H1 (cell line): ENCODE measurements at regions of chr6 and their contacts with region 1.

Region 1: GRCh38 chr6:2870056-2870674 is 28.5 kb upstream of the SERPINB1 start:
- DNase-seq: no peak
- H3K4me3 ChIP-seq: no peak overlapping the region
- H3K27ac ChIP-seq: no peak overlapping the region
- H3K4me1 ChIP-seq: peaks cover 12 to 21% (median 16%) of the 10 kb centered on the region in 4 experiments
- H3K27me3 ChIP-seq: peaks cover 0 to 7% (median 6%) of the 10 kb centered on the region in 4 experiments; a peak in 3 of 7 replicates
- CTCF ChIP-seq: no peak
- EP300 ChIP-seq: no peak
- POLR2A ChIP-seq: no peak
- RAD21 ChIP-seq: no peak

Region 2: DNA sequence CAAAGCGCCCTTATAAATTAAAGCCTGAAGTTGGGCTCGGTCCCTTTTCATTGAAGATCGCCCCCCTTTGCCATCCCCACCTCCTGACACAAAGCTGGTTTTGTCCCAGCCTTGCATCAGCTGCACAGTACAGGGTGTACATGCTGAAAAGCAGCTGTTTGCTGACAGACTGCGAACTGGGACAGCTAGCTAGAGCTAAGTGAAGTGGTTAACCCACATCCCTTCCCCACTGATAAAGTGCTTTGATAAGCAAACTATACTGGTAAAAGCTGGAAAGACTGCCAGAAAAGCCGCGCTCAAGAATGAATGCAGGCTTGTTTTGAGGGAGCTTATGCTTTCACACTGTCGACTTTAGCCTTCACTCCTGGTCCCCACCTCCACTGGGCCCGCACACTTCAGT is 832.1 kb before region 1 on chr6:
- CTCF ChIA-PET with region 1: no interaction called
- POLR2A ChIA-PET with region 1: no interaction called
- DNase-seq: no peak
- H3K4me3 ChIP-seq: no peak overlapping the region
- H3K27ac ChIP-seq: no peak overlapping the region
- H3K4me1 ChIP-seq: no peaks in the 10 kb centered on the region
- H3K27me3 ChIP-seq: no peaks in the 10 kb centered on the region
- CTCF ChIP-seq: no peak
- EP300 ChIP-seq: no peak
- POLR2A ChIP-seq: no peak
- RAD21 ChIP-seq: no peak

Region 3: GRCh38 chr6:2725999-2726567 is 144.1 kb before region 1 on chr6:
- CTCF ChIA-PET with region 1: no interaction called
- POLR2A ChIA-PET with region 1: no interaction called
- DNase-seq: no peak
- H3K4me3 ChIP-seq: no peak overlapping the region
- H3K27ac ChIP-seq: no peak overlapping the region
- H3K4me1 ChIP-seq: no peaks in the 10 kb centered on the region; a peak in 2 of 7 replicates
- H3K27me3 ChIP-seq: no peaks in the 10 kb centered on the region; a peak in 1 of 7 replicates
- CTCF ChIP-seq: no peak
- EP300 ChIP-seq: no peak
- POLR2A ChIP-seq: no peak
- RAD21 ChIP-seq: no peak

Region 4: GRCh38 chr6:2834262-2834661 is 35.9 kb before region 1 on chr6:
- CTCF ChIA-PET with region 1: no interaction called
- POLR2A ChIA-PET with region 1: no interaction called
- DNase-seq: no peak
- H3K4me3 ChIP-seq: no peak overlapping the region
- H3K27ac ChIP-seq: no peak overlapping the region
- H3K4me1 ChIP-seq: no peaks in the 10 kb centered on the region; a peak in 1 of 7 replicates
- H3K27me3 ChIP-seq: no peaks in the 10 kb centered on the region
- CTCF ChIP-seq: no peak
- EP300 ChIP-seq: no peak
- POLR2A ChIP-seq: no peak
- RAD21 ChIP-seq: no peak

Region 5: GRCh38 chr6:2853761-2854395 is 16.3 kb before region 1 on chr6:
- CTCF ChIA-PET with region 1: interaction called, 27 read pairs
- POLR2A ChIA-PET with region 1: interaction called, 18 read pairs
- DNase-seq: no peak
- H3K4me3 ChIP-seq: peak overlapping the region in 2 of 4 experiments; percentile 4 to 30; a peak in 3 of 8 replicates
- H3K27ac ChIP-seq: 0 out of 2 replicates have a peak overlapping the region, but pooled peaks have one; percentile 13
- H3K4me1 ChIP-seq: peaks cover 3 to 20% (median 9%) of the 10 kb centered on the region in 4 experiments
- H3K27me3 ChIP-seq: no peaks in the 10 kb centered on the region
- CTCF ChIP-seq: no peak
- EP300 ChIP-seq: no peak
- POLR2A ChIP-seq: no peak
- RAD21 ChIP-seq: no peak

Region 6: GRCh38 chr6:2911171-2911570 is 41.0 kb after region 1 on chr6:
- CTCF ChIA-PET with region 1: interaction called, 29 read pairs
- POLR2A ChIA-PET with region 1: interaction called, 4 read pairs
- DNase-seq: no peak
- H3K4me3 ChIP-seq: no peak overlapping the region
- H3K27ac ChIP-seq: no peak overlapping the region
- H3K4me1 ChIP-seq: peaks cover 2 to 19% (median 15%) of the 10 kb centered on the region in 4 experiments; a peak in 6 of 7 replicates
- H3K27me3 ChIP-seq: no peaks in the 10 kb centered on the region
- CTCF ChIP-seq: no peak
- EP300 ChIP-seq: no peak
- POLR2A ChIP-seq: no peak
- RAD21 ChIP-seq: no peak